ENCODE measurements at regions of chr3 and their contacts with region 1.

Region 1: DNA sequence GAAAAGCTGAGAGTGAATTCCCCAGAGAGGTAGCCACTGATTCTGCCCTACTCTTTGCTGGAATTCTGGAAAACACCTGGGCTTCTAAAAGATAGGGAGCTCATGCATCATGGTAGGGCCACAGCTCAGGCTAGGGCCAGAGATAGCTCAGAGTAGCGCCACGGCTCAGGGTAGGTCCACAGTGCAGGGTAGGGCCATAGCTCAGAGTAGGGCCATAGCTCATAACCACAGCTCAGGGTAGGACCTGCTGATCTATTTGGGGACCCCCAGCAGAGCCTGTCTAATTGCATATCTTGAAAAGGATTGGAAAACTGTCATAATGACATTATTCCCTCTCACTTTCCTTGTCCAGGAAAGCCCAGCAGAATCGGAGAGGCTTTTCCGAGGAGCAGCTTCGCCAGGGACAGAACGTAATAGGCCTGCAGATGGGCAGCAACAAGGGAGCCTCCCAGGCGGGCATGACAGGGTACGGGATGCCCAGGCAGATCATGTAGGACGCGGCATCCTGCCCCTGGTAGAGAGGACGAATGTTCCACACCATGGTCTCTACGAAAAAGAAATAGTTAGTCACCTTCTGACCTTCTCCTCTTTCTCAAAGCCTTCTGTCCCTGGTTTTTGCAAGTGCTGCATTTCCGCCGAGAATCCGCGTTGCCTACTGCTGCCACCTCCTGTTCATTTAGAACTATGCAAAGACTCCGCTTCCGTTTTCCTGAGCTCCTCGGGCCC is 14.5 kb downstream of the TAGLN3 start:
- DNase-seq: peak; percentile 48
- H3K4me3 ChIP-seq: no peak overlapping the region
- H3K27ac ChIP-seq: no peak overlapping the region
- H3K4me1 ChIP-seq: peaks cover 3 to 8% of the 10 kb centered on the region in 2 experiments; a peak in 2 of 4 replicates
- H3K27me3 ChIP-seq: no peaks in the 10 kb centered on the region
- CTCF ChIP-seq: peak; percentile 66
- EP300 ChIP-seq: no peak
- RAD21 ChIP-seq: peak; percentile 81

Region 2: DNA sequence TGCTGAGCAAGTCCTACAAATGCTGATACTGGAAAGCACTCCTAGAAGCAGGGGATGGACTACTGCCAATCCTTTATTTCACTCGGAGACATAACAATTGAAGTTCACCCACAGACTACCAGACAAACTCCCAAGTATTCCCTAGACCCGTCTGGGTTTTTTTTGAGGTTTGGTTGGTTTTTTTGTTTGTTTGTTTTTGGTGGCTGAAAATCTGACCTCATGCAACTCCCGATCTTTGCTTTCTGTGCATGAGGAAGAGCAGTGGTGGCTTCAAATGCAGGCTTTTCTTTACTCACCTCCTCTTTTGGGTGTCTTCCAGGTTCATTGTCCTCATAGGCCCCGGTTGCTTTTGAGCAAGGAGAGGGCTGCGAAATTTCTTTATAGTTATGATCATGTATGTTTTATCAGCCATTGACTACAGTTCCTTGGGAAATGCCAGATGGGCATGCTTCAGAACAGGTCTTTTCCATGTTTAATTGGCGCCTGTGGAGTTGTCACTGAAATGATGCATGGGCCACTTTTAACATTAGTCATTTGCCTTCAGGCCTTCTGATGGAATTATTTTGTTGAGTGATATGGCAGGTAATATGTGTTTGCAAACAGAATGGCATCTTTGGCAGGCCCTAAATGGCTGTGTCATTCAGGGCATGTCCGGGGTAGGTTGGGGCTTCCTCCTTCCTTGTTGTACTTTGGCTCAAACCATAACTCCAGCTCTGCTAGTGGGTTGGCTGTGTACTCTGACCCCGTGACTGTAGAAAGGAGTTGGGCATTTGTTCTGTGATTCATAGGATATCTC is 336.8 kb before region 1 on chr3:
- CTCF ChIA-PET with region 1: no interaction called
- POLR2A ChIA-PET with region 1: no interaction called
- DNase-seq: no peak
- H3K4me3 ChIP-seq: peak overlapping the region; percentile 74 to 77
- H3K27ac ChIP-seq: peak overlapping the region; percentile 77 to 86
- H3K4me1 ChIP-seq: peaks cover 0 to 26% of the 10 kb centered on the region in 2 experiments; a peak in 2 of 4 replicates
- H3K27me3 ChIP-seq: no peaks in the 10 kb centered on the region
- CTCF ChIP-seq: no peak
- EP300 ChIP-seq: peak in 1 of 2 experiments; percentile 70; a peak in 2 of 4 replicates
- RAD21 ChIP-seq: no peak

Region 3: DNA sequence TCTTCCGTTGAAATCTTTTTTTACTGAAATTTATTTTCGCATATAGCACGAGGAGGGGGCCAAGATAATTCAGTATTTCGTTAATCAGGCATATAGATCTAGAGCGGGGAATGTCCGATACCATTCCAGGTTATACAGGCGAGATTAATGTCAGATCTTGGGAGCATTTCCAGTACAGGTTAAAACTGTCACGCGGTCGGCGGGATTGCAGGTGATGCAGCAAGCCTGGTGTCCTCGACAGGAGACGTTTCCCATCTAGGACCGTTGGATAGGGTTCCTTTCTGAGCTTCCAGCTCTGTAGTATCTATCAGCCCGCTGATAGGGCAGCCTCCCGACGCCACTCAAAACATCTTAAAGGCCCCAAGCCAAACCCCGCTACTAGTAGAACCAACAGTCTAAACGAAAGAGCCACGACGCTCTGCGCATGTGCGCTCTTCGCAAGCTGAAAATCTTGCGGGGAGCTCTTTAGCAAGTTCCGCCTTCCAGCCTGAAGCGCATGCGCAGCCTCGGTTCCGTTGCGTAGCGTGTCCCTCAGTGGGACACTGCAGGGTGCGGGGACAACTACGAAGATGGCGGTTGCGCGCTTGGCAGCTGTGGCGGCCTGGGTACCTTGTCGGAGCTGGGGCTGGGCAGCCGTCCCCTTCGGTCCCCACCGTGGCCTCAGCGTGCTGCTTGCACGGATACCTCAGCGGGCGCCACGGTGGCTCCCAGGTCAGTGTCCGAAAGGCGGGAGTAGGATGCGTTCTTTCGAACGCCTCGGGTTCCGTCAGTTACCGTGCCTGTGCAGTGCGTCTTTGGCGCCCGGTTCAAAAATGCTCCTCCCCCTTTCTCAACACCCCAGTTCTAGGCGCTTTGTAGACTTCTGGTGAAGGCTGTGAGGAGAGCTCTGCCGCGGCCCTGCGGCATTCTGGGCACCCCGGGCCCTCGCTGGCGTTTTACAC is 34.5 kb before region 1 on chr3 and contains the start of gene ABHD10:
- CTCF ChIA-PET with region 1: interaction called, 19 read pairs
- POLR2A ChIA-PET with region 1: no interaction called
- DNase-seq: peak; percentile 90
- H3K4me3 ChIP-seq: peak within 1 kb of the TSS; percentile 84 to 92
- H3K27ac ChIP-seq: peak within 1 kb of the TSS; percentile 70 to 92
- H3K4me1 ChIP-seq: peaks cover 8 to 12% of the 10 kb centered on the region in 2 experiments; a peak in 3 of 4 replicates
- H3K27me3 ChIP-seq: no peaks in the 10 kb centered on the region
- CTCF ChIP-seq: no peak
- EP300 ChIP-seq: no peak
- RAD21 ChIP-seq: no peak
- polyA plus RNA-seq, gene ABHD10: 14.8 and 18.3 TPM in 2 replicates

Region 4: GRCh38 chr3:111989061-111989678 is 24.1 kb before region 1 on chr3:
- CTCF ChIA-PET with region 1: interaction called, 165 read pairs
- POLR2A ChIA-PET with region 1: interaction called, 3 read pairs
- DNase-seq: peak; percentile 57
- H3K4me3 ChIP-seq: peak overlapping the region in 1 of 2 experiments; percentile 5; a peak in 1 of 4 replicates
- H3K27ac ChIP-seq: 0 out of 4 replicates have a peak overlapping the region, but pooled peaks of 1 of the 2 experiments have one; percentile 7
- H3K4me1 ChIP-seq: peaks cover 0 to 5% of the 10 kb centered on the region in 2 experiments; a peak in 1 of 4 replicates
- H3K27me3 ChIP-seq: no peaks in the 10 kb centered on the region
- CTCF ChIP-seq: peak; percentile 86
- EP300 ChIP-seq: no peak
- RAD21 ChIP-seq: peak; percentile 77

Region 5: GRCh38 chr3:111998636-111999483 is 14.4 kb before region 1 on chr3 and contains the start of gene TAGLN3:
- CTCF ChIA-PET with region 1: interaction called, 165 read pairs
- POLR2A ChIA-PET with region 1: interaction called, 11 read pairs
- DNase-seq: peak; percentile 70
- H3K4me3 ChIP-seq: peak within 1 kb of the TSS; percentile 61 to 77
- H3K27ac ChIP-seq: peak within 1 kb of the TSS; percentile 29 to 96
- H3K4me1 ChIP-seq: peaks cover 12 to 33% of the 10 kb centered on the region in 2 experiments; a peak in 3 of 4 replicates
- H3K27me3 ChIP-seq: no peaks in the 10 kb centered on the region
- CTCF ChIP-seq: no peak
- EP300 ChIP-seq: no peak
- RAD21 ChIP-seq: no peak
- polyA plus RNA-seq, gene TAGLN3: 19.6 and 24.2 TPM in 2 replicates

Region 6: DNA sequence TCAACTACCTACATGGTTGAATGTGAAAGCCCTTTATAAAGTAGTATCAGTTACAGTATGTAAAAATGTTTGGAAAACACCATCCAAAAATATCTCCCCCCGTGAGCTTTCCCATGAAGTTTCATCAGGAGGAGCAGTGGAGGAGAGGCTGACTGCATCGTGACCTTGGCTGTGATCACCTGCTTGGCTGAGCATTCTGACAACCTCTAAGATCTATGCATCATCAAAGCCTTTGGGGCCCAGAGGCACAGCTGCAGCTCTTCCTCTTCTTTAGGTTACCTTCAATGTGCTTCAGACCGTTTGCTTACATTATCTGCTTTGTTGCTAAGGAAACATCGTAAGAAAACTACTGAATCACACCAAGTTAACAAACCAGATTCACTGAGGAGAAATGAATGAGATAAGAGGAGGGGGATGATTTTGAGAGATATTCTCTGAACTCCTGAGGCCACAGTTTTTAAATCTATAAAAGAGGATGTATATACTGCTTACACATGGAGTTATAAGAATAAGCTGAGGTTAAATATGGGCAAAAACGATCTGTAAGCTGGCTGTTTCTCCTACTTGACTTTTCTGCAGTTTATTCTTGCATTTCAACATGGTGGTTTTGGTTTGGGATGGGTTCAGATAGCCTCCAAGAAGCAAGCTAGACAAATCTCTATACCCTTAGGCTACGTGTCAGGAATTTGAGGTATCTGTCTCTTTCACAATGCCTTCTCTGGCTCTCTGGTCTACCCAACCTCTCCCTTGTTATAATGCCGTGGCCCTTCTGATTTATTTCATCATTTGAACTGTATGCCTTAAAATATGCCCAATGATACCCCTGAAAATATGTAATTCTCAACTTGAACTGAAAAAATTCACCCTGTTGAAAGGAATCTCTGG is 115.9 kb after region 1 on chr3:
- CTCF ChIA-PET with region 1: no interaction called
- POLR2A ChIA-PET with region 1: no interaction called
- DNase-seq: no peak
- H3K4me3 ChIP-seq: no peak overlapping the region
- H3K27ac ChIP-seq: no peak overlapping the region
- H3K4me1 ChIP-seq: peaks cover 0 to under 1% of the 10 kb centered on the region in 2 experiments; a peak in 1 of 4 replicates
- H3K27me3 ChIP-seq: no peaks in the 10 kb centered on the region
- CTCF ChIP-seq: no peak
- EP300 ChIP-seq: no peak
- RAD21 ChIP-seq: no peak